GM10248 (cell line): ENCODE measurements at regions of chr6 and their contacts with region 1.

Region 1: DNA sequence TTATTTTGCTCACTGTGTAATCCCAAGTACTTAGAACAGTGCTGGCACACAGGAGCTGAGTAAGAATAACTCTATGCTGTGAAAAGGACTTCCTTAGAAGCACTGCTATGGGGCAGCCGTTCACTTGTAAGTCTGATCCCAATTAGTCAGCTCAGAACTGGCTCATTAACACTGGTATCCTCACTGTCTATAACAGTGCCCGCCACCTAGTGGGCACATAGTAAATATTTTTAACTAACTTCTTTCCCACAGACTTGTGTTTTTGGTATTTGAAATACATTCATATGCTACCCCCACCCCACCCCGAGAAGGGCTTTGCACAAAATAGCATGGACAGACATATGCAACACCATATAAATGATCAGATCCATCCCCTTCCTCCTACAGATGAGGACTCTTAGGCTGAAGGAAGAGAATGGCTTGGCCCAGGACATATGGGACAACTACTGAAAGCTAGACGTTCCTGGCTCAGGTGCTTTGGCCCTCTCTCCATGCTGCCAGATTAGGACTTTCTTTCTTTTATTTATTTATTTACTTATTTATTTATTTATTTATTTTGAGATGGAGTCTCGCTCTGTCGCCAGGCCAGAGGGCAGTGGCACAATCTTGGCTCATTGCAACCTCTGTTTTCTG is 47.1 kb downstream of the DST start:
- DNase-seq: peak; percentile 32
- CTCF ChIP-seq: peak; percentile 52

Region 2: GRCh38 chr6:56220083-56220482 is 375.5 kb before region 1 on chr6:
- CTCF ChIA-PET with region 1: no interaction called
- POLR2A ChIA-PET with region 1: no interaction called
- DNase-seq: no peak
- CTCF ChIP-seq: no peak

Region 3: DNA sequence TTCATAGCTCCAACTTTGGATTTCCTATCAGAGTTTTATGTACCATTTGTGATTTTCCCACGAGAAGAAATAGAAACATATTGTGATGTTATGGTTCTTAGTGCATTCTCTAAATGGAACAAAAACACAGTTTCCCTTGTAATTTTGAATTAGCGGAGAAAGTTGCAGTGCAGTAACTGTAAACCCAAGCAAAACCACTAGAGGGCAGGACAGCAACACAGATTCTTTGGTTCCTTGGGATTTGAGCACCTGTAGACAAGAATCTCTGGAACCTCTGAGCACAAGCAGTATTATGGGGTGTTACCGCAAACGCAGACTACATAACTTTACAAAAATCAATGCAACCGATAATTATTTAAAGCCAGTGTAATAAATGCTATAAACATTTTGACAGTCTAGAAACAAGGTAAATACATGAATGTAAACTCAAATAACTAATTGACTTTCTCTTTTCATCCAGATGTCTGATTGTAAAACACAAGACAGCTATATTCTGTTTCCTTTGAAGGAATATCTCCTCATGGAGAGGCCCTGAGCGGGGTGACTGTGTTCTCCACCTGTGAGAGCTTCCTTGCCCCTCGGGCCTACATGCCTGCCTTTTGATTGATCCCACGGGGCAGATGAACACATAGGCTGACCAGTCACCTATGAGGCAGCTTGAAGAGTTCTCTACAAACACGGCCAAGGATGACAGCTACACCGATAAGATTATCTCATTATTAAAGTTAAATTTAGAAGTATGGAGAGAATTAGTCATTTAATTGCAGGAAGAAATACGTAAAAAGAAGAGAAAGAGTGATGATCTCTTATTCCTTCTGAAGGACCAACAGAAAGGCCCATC is 280.7 kb before region 1 on chr6:
- CTCF ChIA-PET with region 1: interaction called, 14 read pairs
- POLR2A ChIA-PET with region 1: no interaction called
- DNase-seq: peak; percentile 20
- CTCF ChIP-seq: peak; percentile 54

Region 4: GRCh38 chr6:56370561-56371211 is 224.9 kb before region 1 on chr6:
- CTCF ChIA-PET with region 1: interaction called, 27 read pairs
- POLR2A ChIA-PET with region 1: no interaction called
- DNase-seq: peak; percentile 18
- CTCF ChIP-seq: no peak

Region 5: DNA sequence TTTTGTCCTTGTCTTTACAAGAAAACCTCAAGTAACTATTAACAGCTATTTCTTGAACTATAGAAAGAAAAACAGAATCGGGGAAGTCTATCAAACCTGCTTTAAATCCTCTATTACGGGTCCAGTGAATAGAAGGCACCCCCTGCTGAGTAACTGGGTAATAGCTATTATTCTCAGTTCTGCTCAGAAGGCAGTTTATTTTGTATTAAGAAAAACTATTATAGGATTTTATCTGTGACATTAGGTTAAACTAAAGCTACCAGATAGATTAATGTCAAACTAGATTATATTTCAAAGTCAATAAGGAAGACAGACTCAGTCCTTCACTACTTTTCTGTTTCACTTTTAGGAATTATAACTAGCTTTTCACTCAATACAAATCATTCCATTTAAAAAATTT is 46.6 kb before region 1 on chr6:
- CTCF ChIA-PET with region 1: interaction called, 17 read pairs
- POLR2A ChIA-PET with region 1: no interaction called
- DNase-seq: no peak
- CTCF ChIP-seq: peak; percentile 28

Region 6: DNA sequence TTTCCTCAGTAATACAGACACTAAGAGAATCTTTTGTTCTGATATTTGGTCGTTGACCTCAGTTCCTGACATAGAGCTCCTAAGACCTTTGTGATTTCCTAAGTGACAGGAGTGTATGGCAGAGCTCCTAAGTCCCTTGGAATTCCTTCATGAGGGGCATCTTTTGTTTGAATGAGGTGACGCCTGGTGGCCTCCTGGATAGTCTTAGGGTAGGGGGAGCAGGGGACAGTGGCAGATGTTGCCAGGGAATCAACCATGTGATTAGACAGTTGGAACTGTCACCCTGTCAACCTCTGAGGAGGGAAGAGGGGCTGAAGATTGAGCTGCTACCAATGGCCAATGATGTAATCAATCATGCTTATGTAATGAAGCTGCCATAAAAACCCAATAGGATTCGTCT is 19.9 kb before region 1 on chr6:
- CTCF ChIA-PET with region 1: interaction called, 25 read pairs
- POLR2A ChIA-PET with region 1: no interaction called
- DNase-seq: no peak
- CTCF ChIP-seq: no peak

Region 7: GRCh38 chr6:56618050-56618449 is 22.4 kb after region 1 on chr6:
- CTCF ChIA-PET with region 1: interaction called, 103 read pairs
- POLR2A ChIA-PET with region 1: no interaction called
- DNase-seq: no peak
- CTCF ChIP-seq: no peak

Region 8: GRCh38 chr6:56851541-56852259 is 256.1 kb after region 1 on chr6:
- CTCF ChIA-PET with region 1: interaction called, 16 read pairs
- POLR2A ChIA-PET with region 1: no interaction called
- DNase-seq: peak; percentile 73
- CTCF ChIP-seq: peak; percentile 67